ENCODE measurements at regions of chr6 and their contacts with region 1.

Region 1: DNA sequence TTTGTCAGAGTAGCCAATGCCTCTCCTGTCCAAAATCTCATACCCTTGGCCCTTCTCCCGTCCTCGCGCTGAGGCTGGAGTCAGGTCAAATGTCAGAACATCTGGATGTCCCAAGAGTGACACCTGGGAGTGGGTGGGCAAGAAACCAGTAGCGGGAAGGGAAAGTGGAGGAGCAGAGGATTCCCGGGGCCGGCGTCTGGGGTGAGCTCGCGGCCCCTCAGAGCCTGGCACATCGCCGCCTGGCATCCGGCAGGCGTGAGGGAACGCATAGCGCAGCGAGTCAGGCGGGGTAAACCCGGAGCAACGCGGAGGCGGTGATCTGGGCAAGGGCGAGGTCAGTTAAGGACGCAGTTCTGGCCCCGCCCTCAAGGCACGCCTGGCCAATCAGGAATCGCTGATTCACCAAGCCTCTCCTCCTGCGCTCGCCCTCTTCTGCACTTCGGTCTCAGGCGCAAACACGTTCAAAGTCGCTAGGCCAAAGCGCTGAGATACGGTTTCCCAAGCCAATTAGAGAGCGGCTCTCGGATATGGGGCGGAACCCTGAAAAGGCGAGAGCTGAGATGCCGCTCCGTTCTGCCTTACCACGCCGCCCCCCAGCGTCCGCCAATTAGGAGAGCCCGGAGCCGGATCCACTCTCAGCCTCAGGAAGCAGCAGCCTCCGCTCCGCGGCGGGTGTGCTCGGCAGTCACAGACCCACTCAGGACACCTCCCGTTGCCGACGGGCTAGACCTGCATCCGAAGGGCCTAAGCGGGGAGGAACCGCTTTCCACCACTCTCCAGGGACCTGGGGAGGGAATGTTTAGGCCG is 22.5 kb downstream of the VPS52 start:
- DNase-seq: peak; percentile 98
- H3K4me3 ChIP-seq: peak overlapping the region; percentile 56
- H3K27me3 ChIP-seq: no peaks in the 10 kb centered on the region
- CTCF ChIP-seq: peak; percentile 25; the same call in 1 of the 2 replicates

Region 2: GRCh38 chr6:33118525-33119123 is 130.5 kb before region 1 on chr6:
- CTCF ChIA-PET with region 1: interaction called, 33 read pairs
- POLR2A ChIA-PET with region 1: no interaction called
- DNase-seq: no peak
- H3K4me3 ChIP-seq: no peak overlapping the region
- H3K27me3 ChIP-seq: peaks cover 32% of the 10 kb centered on the region
- CTCF ChIP-seq: peak; percentile 65

Region 3: GRCh38 chr6:33147807-33148666 is 101.1 kb before region 1 on chr6:
- CTCF ChIA-PET with region 1: interaction called, 16 read pairs
- POLR2A ChIA-PET with region 1: interaction called, 13 read pairs
- DNase-seq: no peak
- H3K4me3 ChIP-seq: no peak overlapping the region
- H3K27me3 ChIP-seq: peaks cover 4% of the 10 kb centered on the region
- CTCF ChIP-seq: peak; percentile 78

Region 4: DNA sequence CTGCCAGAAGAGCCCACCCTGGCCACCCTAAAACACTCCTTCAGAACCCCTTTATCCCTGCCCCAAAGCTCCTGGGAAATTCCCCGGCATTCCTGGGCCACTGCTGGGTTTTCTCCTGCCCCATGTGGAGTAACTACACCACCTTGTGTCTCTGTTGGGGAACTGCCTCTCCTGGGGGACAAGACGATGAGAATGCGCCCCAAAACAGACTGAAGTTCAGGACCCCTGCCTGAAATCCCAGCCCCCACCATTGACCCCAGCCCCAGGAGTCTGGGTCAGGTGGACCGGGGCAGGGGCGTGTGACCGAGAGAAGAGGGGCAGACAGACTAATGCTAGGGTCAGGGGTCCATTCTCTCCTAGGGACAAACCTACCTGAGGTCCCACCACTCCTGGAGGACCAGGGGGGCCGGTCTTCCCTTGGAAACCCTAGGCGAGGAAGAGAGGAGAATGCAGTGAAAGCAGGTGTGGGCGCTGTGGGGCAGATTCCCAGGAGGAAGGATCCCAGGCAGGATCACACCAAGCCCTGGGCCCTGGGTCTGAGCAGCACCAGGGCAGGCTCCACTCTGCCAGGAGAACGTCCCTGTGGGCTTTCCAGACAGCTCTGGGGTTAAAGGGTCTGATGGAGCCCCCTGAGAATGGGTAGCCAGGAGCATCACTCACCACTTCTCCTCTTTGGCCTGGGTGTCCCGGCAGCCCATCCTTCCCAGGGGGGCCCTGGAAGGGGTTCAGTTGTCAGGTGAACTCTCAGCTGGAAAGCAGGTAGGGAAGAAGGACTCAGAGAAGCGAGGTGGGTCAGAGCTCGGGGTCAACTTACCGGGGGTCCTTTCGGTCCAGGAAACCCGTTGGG is 76.2 kb before region 1 on chr6:
- CTCF ChIA-PET with region 1: interaction called, 11 read pairs
- POLR2A ChIA-PET with region 1: no interaction called
- DNase-seq: no peak
- H3K4me3 ChIP-seq: no peak overlapping the region
- H3K27me3 ChIP-seq: peaks cover 3% of the 10 kb centered on the region
- CTCF ChIP-seq: peak; percentile 76

Region 5: DNA sequence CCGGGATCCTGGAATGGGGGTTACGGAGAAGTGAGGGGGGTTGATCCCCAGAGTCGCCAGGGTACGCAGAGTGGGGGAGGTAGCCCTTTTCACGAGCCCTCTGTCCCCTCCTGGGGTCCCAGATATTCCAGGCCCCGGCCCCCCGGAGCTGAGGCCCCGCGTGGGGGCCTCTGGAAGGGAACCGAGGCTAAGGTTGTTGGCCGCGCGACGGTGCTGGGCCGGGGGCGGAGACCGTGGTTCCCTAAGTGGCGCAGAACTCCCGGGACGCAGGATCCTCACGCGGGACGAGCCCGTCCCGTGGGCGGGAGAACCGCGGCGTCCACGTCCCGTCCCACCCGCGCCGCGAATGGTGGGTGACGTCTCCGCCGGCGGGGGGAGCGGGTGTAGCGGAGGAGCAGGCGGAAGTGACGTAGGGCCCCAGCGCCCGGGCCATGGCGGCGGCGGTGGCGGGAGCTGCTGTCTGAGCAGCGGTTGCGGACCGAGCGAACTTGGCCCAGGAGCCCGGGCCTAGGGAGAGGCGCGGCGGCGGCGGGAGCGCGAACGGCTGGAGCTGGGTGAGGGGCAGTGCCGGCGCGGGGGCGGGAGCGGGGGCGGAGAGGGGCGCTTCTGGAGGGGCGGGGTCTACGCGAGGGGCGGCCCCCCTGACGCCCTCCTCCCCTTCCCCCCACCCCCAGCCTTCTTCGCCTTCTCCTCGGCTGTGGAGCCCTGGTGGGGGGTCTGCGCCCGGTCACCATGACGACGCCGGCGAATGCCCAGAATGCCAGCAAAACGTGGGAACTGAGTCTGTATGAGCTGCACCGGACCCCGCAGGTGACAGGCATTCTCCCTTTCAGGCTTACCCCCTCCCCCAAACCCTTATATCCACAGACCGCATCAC is 40.8 kb before region 1 on chr6 and contains the start of gene RING1:
- CTCF ChIA-PET with region 1: interaction called, 20 read pairs
- POLR2A ChIA-PET with region 1: no interaction called
- DNase-seq: no peak
- H3K4me3 ChIP-seq: peak within 1 kb of the TSS; percentile 84
- H3K27me3 ChIP-seq: no peaks in the 10 kb centered on the region
- CTCF ChIP-seq: no peak
- polyA plus RNA-seq, gene RING1: 24.4 and 36.6 TPM in 2 replicates

Region 6: DNA sequence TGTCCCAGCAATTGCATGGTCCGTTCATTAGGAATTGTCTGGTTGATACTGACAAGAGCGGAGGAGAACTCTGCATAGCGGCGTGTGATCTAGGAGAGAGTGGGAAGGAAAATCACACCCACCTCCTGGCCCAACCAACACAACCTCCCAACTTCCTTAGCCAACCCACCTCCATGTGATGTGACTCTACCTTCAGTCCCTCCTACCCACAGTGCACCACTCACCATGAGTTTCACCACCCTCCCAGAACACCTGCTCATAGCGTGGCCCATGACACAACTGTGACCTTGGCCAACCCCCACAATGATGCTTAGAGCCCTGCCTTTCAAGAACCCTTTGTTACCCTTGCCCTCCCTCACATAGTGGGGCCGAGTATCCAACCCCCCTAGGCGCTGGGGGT is 14.9 kb after region 1 on chr6:
- CTCF ChIA-PET with region 1: interaction called, 11 read pairs
- POLR2A ChIA-PET with region 1: no interaction called
- DNase-seq: no peak
- H3K4me3 ChIP-seq: no peak overlapping the region
- H3K27me3 ChIP-seq: no peaks in the 10 kb centered on the region
- CTCF ChIP-seq: no peak

Measured in BJ (cell line).